ENCODE measurements at regions of chr15 and their contacts with region 1.

Region 1: GRCh38 chr15:52735231-52736089 is 54.7 kb downstream of the ONECUT1 start:
- DNase-seq: peak; percentile 5
- H3K4me3 ChIP-seq: no peak overlapping the region
- CTCF ChIP-seq: peak; percentile 48

Region 2: GRCh38 chr15:52261498-52262242 is 473.8 kb before region 1 on chr15:
- CTCF ChIA-PET with region 1: interaction called, 256 read pairs
- POLR2A ChIA-PET with region 1: interaction called, 3 read pairs
- DNase-seq: peak; percentile 21
- H3K4me3 ChIP-seq: no peak overlapping the region
- CTCF ChIP-seq: peak; percentile 11

Region 3: GRCh38 chr15:52331490-52332240 is 403.8 kb before region 1 on chr15:
- CTCF ChIA-PET with region 1: interaction called, 27 read pairs
- POLR2A ChIA-PET with region 1: no interaction called
- DNase-seq: no peak
- H3K4me3 ChIP-seq: no peak overlapping the region
- CTCF ChIP-seq: peak; percentile 44

Measured in AG04449 (cell line).